AG04450 (cell line): ENCODE measurements at regions of chr3 and their contacts with region 1.

Region 1: GRCh38 chr3:185677146-185677829 is 91.2 kb downstream of the SENP2 start:
- DNase-seq: peak; percentile 56
- H3K4me3 ChIP-seq: no peak overlapping the region
- H3K27ac ChIP-seq: no peak overlapping the region
- H3K27me3 ChIP-seq: no peaks in the 10 kb centered on the region
- CTCF ChIP-seq: peak; percentile 84

Region 2: GRCh38 chr3:184874709-184875644 is 802.3 kb before region 1 on chr3:
- CTCF ChIA-PET with region 1: no interaction called
- POLR2A ChIA-PET with region 1: no interaction called
- DNase-seq: no peak
- H3K4me3 ChIP-seq: no peak overlapping the region
- H3K27ac ChIP-seq: no peak overlapping the region
- H3K27me3 ChIP-seq: no peaks in the 10 kb centered on the region
- CTCF ChIP-seq: peak; percentile 64

Region 3: GRCh38 chr3:185409957-185410356 is 267.3 kb before region 1 on chr3:
- CTCF ChIA-PET with region 1: no interaction called
- POLR2A ChIA-PET with region 1: no interaction called
- DNase-seq: no peak
- H3K4me3 ChIP-seq: no peak overlapping the region
- H3K27ac ChIP-seq: no peak overlapping the region
- H3K27me3 ChIP-seq: no peaks in the 10 kb centered on the region
- CTCF ChIP-seq: no peak

Region 4: GRCh38 chr3:185687271-185687878 is 10.1 kb after region 1 on chr3:
- CTCF ChIA-PET with region 1: interaction called, 18 read pairs
- POLR2A ChIA-PET with region 1: no interaction called
- DNase-seq: no peak
- H3K4me3 ChIP-seq: no peak overlapping the region
- H3K27ac ChIP-seq: no peak overlapping the region
- H3K27me3 ChIP-seq: no peaks in the 10 kb centered on the region
- CTCF ChIP-seq: no peak

Region 5: DNA sequence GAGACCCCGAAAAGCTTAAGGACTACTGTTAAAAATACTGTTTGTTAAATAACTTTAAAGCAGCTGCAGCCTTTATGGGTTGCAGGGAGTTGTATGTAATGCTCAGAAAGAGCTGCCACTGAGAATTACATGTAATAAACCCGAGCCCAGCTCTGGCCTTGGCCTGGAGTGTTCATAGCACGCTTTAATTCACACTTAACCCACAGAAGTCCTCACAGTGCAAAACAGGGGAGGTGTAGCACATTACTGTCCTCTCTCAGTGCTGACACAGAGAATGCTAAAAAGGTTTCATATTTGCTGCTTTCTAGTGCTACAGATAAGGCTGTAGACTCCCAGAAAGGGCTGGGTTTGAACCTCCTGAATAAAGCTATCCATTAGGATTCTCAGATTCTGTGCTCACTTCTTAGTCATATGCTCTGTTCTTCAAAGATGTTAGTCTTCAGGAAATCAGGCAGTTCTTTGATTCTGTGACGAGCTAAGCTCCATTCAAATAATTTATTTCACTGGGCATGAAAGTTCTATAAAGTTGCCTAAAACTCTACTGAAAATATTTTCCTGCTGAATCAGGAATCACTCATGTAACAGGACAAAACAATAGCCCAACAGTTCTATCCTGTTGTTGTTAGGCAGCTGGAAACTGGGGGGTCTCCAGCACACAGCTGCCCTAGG is 16.8 kb after region 1 on chr3:
- CTCF ChIA-PET with region 1: interaction called, 18 read pairs
- POLR2A ChIA-PET with region 1: no interaction called
- DNase-seq: no peak
- H3K4me3 ChIP-seq: no peak overlapping the region
- H3K27ac ChIP-seq: peak overlapping the region; percentile 61
- H3K27me3 ChIP-seq: no peaks in the 10 kb centered on the region
- CTCF ChIP-seq: no peak

Region 6: GRCh38 chr3:185733980-185734724 is 56.9 kb after region 1 on chr3:
- CTCF ChIA-PET with region 1: interaction called, 11 read pairs
- POLR2A ChIA-PET with region 1: no interaction called
- DNase-seq: peak; percentile 72
- H3K4me3 ChIP-seq: no peak overlapping the region
- H3K27ac ChIP-seq: no peak overlapping the region
- H3K27me3 ChIP-seq: no peaks in the 10 kb centered on the region
- CTCF ChIP-seq: peak; percentile 76

Region 7: DNA sequence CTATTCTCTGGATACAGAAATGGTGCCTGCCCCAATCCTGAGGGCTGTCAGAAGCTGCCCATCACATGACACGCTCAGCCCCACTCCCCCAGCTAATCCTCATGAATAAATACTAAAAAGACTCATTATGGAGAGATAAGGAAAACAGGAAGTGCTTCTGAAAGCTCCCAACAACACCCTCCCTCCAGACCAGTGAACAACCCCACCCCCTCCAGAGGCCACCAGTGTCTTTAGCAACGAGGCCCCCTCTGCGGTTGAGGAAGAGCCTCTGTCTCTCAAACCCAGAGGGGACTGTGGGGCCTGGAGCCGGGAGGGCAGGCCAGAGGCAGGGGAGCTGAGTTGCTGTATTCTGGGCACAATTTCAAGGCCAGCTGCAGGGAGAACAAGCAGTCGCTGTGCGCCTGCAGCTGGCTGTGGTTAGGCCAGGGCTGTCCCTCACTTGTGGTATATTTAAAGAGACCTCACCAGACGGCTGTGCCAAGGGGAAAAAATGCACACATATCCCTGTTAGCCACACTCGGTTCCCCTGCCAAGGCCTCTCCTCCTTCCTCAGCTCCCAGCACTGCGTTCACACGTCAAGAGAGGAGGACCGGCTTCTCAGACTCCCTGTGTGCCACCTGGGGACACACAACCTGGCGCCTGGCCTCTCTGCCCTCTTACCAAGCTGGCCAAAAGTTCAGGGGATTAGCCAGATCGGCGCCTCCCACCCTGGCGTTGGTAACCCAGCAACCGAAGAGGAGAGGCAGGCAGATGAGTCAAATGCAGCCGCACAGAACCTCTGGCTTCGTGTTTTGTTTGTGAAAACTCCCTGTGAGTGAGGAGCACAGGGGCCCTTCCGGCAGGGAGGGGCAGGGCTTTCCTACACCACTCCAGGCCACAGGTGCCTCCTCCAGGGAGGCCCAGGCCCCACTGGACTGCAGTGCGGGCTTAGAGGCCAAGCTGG is 532.8 kb after region 1 on chr3:
- CTCF ChIA-PET with region 1: no interaction called
- POLR2A ChIA-PET with region 1: no interaction called
- DNase-seq: peak; percentile 26
- H3K4me3 ChIP-seq: peak overlapping the region; percentile 35
- H3K27ac ChIP-seq: peak overlapping the region; percentile 75
- H3K27me3 ChIP-seq: no peaks in the 10 kb centered on the region
- CTCF ChIP-seq: no peak